Psoas muscle (tissue), 8 donors: ENCODE measurements at regions of chr17 and their contacts with region 1.

Region 1: GRCh38 chr17:44132275-44132821 is 8.9 kb upstream of the HDAC5 start:
- DNase-seq: no peak
- ATAC-seq: no peak
- H3K4me3 ChIP-seq: no peak overlapping the region
- H3K27ac ChIP-seq: no peak overlapping the region
- H3K4me1 ChIP-seq: no peaks in the 10 kb centered on the region
- H3K27me3 ChIP-seq: no peaks in the 10 kb centered on the region
- CTCF ChIP-seq: no peak

Region 2: DNA sequence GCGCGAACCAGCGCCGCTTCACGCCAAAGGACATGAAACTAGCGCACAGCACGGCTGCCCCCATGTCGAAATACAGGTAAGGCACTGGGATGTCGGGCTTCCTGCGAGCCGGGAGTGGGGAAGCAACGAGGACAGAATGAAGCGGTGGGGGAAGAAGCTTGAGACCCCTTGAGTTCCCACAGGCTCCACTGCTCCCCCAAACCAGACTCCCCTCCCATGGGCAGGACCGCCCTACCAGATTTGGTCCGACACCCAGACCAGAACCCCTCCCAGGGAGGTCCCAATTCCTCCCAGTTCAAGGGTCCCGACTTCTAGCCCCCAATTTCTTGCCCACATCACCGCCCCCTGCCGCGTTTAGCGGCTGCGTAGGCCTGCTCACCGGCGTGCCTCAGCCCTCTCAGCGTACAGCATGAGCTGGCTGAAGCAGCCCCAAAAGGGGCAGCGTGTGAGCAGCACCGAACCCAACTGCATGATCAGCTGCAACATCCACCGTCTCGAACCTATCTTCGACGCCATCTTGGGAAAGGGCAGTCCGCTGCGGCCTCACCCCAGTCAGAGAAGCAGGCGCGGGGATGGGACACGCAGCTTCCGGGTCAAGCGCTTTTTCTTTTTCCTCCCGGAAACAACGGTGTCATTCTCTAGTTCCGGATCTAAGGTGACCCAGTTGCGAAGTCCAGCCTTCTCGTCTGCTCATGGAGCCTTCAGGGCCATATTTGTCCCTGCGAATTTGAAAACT is 117.7 kb before region 1 on chr17 and contains the start of gene TMEM101:
- intact Hi-C with region 1: no loop called
- DNase-seq: peak; percentile 91 to 95
- ATAC-seq: peak; percentile 93 to 98 (median 96)
- H3K4me3 ChIP-seq: peak within 1 kb of the TSS; percentile 95
- H3K27ac ChIP-seq: peak within 1 kb of the TSS; percentile 82
- H3K4me1 ChIP-seq: peaks cover 4% of the 10 kb centered on the region
- H3K27me3 ChIP-seq: no peaks in the 10 kb centered on the region
- CTCF ChIP-seq: no peak
- total RNA-seq, gene TMEM101: 13.2 to 25.4 (median 18.3) TPM

Region 3: GRCh38 chr17:44170499-44171201 is 38.3 kb after region 1 on chr17 and contains the start of gene ASB16:
- intact Hi-C with region 1: loop called (anchors 5 kb)
- DNase-seq: peak; percentile 63 to 89
- ATAC-seq: peak; percentile 90 to 93 (median 92)
- H3K4me3 ChIP-seq: peak within 1 kb of the TSS; percentile 77
- H3K27ac ChIP-seq: peak within 1 kb of the TSS; percentile 100
- H3K4me1 ChIP-seq: peaks cover 41% of the 10 kb centered on the region
- H3K27me3 ChIP-seq: no peaks in the 10 kb centered on the region
- CTCF ChIP-seq: no peak
- total RNA-seq, gene ASB16: 17.0 to 43.4 (median 26.1) TPM